Activated CD8-positive, alpha-beta T cell treated with anti-CD3 and anti-CD28 coated beads for 36 hours (primary cell): ENCODE measurements at regions of chr1 and their contacts with region 1.

Region 1: DNA sequence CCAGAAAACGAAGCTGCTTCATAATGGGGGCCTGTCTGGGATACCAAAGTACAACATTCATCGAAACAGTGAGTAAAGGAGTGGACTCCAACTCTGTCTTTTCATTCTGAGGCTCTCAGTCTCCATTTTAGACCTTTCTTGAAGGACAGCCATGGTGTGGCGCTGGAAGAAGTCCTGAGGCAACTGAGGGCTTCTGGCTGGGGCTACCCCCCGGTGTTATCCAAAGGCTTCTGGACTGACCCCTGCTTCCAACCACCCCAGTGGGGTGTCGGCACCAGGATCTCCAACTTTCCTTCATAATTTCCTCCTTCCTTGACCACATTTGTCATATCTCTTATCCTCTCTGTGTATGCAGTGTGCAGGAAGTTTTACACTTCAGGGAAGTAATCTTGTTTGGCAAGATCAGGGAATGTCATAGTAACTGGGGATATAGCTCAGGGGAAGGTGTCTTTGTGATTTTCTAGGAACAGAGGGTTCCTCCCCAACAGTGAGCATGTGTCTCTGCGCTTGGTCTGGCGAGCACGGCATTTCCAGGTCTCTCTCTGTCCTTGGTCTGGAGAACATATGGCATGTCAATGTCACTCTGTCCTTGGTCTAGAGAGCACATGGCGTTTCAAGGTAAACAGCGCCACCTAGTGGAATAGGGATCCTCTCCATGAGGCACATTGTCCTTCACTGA is 19.4 kb upstream of the BSDC1 start:
- DNase-seq: peak; percentile 85
- ATAC-seq: peak; percentile 79
- H3K4me3 Mint-ChIP-seq: no peak overlapping the region
- H3K27ac Mint-ChIP-seq: no peak overlapping the region
- H3K4me1 Mint-ChIP-seq: peaks cover 3% of the 10 kb centered on the region
- H3K27me3 Mint-ChIP-seq: peaks cover 4% of the 10 kb centered on the region
- CTCF ChIP-seq: peak; percentile 87

Region 2: DNA sequence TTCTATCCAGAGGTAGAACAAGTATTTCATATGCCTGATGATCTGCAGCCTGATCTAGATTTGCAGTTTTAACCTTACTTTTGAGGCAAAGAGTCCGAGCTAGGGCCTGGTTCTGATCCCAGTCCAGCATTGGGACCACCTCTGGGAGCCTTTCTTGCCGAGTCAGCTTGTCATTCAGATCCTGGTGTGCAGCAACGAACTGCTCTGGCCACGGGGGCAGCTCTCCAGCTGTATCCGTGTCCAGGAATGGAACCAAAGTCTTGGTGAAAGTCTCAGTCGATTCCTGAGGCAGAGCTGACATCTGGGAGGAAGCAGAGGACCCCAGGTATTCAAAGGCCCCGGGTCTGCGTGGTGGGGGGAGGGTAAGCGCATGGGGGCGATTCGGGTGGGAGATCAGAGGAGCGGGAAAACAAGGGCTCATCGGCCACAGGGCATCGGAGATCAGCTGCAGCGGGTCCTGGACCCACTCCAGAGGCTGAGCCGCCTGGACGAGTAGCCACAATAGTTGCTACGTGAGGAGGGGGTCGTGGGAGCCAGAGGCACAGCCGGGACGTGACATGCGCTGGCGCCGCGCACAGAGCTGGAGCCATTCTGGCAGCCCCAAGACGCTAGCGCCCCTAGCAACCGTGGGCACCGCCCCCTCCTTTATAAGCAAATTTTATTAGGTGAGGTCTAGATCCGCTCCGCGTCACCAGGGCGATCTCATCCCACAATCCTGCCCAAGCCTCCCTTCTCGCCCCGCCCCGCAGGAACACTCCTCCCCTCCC is 13.0 kb after region 1 on chr1:
- CTCF ChIA-PET with region 1: interaction called, 13 read pairs
- POLR2A ChIA-PET with region 1: no interaction called
- intact Hi-C with region 1: no loop called
- DNase-seq: no peak
- ATAC-seq: no peak
- H3K4me3 Mint-ChIP-seq: no peak overlapping the region
- H3K27ac Mint-ChIP-seq: no peak overlapping the region
- H3K4me1 Mint-ChIP-seq: no peaks in the 10 kb centered on the region
- H3K27me3 Mint-ChIP-seq: peaks cover 31% of the 10 kb centered on the region
- CTCF ChIP-seq: no peak